AG04450 (cell line): ENCODE measurements at regions of chr17 and their contacts with region 1.

Region 1: GRCh38 chr17:42322382-42323267 is 34.3 kb downstream of the STAT5A start:
- DNase-seq: peak; percentile 88
- H3K4me3 ChIP-seq: no peak overlapping the region
- H3K27ac ChIP-seq: no peak overlapping the region
- H3K27me3 ChIP-seq: no peaks in the 10 kb centered on the region
- CTCF ChIP-seq: peak; percentile 100

Region 2: DNA sequence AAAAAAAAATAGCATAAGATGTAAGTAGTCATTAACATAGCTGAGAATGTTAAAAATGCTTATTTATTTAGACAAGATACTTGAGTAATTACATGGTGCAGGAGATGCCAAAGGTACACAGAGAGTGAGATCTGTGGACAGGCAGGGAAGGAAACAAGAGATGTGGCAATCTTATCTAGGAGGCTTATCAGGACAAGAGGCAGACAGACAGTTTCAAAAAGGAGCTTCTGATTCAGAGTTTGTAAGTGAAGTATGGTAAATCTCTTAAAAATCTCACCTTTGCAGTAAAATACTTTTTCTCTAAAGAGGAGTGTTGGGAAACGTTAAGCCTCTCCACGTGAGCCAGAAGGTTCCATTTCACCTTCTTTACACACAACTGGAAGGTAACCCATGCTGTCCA is 108.5 kb before region 1 on chr17:
- CTCF ChIA-PET with region 1: no interaction called
- POLR2A ChIA-PET with region 1: no interaction called
- DNase-seq: no peak
- H3K4me3 ChIP-seq: no peak overlapping the region
- H3K27ac ChIP-seq: no peak overlapping the region
- H3K27me3 ChIP-seq: no peaks in the 10 kb centered on the region
- CTCF ChIP-seq: no peak

Region 3: GRCh38 chr17:42275527-42276358 is 46.9 kb before region 1 on chr17:
- CTCF ChIA-PET with region 1: interaction called, 12 read pairs
- POLR2A ChIA-PET with region 1: interaction called, 5 read pairs
- DNase-seq: peak; percentile 15
- H3K4me3 ChIP-seq: peak overlapping the region; percentile 78
- H3K27ac ChIP-seq: peak overlapping the region; percentile 73
- H3K27me3 ChIP-seq: peaks cover 2% of the 10 kb centered on the region
- CTCF ChIP-seq: no peak

Region 4: GRCh38 chr17:42358434-42358833 is 35.8 kb after region 1 on chr17:
- CTCF ChIA-PET with region 1: no interaction called
- POLR2A ChIA-PET with region 1: no interaction called
- DNase-seq: no peak
- H3K4me3 ChIP-seq: no peak overlapping the region
- H3K27ac ChIP-seq: no peak overlapping the region
- H3K27me3 ChIP-seq: no peaks in the 10 kb centered on the region
- CTCF ChIP-seq: no peak

Region 5: DNA sequence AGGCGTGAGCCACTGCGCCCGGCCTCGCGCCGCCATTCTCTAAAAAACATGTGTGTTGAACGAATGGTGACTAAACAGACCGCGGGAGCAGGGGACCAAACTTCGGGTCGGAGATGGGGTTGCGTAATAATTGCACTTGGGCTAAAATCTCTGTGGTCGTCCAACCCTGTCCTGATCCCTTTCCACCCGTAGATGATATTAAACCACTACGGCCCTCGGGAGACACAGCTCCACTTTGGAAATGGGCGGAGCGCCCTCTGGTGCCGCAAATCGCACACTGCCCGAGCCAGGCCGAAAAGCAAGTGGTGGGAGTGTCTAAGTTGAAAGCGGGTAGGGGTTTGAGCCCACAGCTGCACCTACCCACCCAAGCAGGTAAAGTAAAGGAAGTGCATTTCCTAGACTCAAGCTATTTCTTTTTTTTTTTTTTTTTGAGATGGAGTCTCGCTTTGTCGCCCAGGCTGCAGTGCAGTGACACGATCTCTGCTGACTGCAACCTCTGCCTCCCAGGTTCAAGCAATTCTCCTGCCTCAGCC is 83.4 kb after region 1 on chr17:
- CTCF ChIA-PET with region 1: interaction called, 14 read pairs
- POLR2A ChIA-PET with region 1: interaction called, 3 read pairs
- DNase-seq: no peak
- H3K4me3 ChIP-seq: no peak overlapping the region
- H3K27ac ChIP-seq: no peak overlapping the region
- H3K27me3 ChIP-seq: no peaks in the 10 kb centered on the region
- CTCF ChIP-seq: peak; percentile 74

Region 6: DNA sequence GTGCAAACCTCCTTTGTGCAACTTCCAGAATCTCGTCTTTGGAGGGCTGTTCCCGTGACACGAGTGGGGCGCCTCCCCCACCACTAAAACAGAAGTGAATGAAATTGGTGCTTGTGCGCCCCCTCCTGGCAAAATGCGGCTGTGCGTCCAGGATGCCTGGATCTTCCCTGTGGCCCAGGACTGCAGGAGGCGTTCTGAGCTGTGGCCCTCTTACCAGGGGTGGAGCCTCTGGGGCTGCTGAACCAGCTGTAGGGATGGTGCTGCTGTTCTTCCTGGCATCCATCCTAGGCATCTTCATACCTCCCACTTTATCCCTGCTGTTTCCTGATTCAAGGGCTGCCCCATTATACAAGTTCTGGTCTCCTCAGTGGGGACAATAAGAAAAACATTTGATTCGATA is 194.9 kb after region 1 on chr17:
- CTCF ChIA-PET with region 1: interaction called, 15 read pairs
- POLR2A ChIA-PET with region 1: interaction called, 3 read pairs
- DNase-seq: peak; percentile 87
- H3K4me3 ChIP-seq: no peak overlapping the region
- H3K27ac ChIP-seq: peak overlapping the region; percentile 100
- H3K27me3 ChIP-seq: no peaks in the 10 kb centered on the region
- CTCF ChIP-seq: peak; percentile 95

Region 7: GRCh38 chr17:42527273-42527703 is 204.7 kb after region 1 on chr17:
- CTCF ChIA-PET with region 1: interaction called, 16 read pairs
- POLR2A ChIA-PET with region 1: interaction called, 10 read pairs
- DNase-seq: peak; percentile 68
- H3K4me3 ChIP-seq: no peak overlapping the region
- H3K27ac ChIP-seq: peak overlapping the region; percentile 11
- H3K27me3 ChIP-seq: no peaks in the 10 kb centered on the region
- CTCF ChIP-seq: peak; percentile 92